Caco-2 (cell line): ENCODE measurements at regions of chr19 and their contacts with region 1.

Region 1: GRCh38 chr19:43743022-43743421 is 11.7 kb downstream of the SMG9 start:
- DNase-seq: no peak
- H3K4me3 ChIP-seq: no peak overlapping the region
- H3K4me3 Mint-ChIP-seq: no peak overlapping the region
- H3K27ac Mint-ChIP-seq: peak overlapping the region; percentile 39
- H3K4me1 ChIP-seq: peaks cover 9% of the 10 kb centered on the region
- H3K4me1 Mint-ChIP-seq: peaks cover 4% of the 10 kb centered on the region
- H3K27me3 ChIP-seq: no peaks in the 10 kb centered on the region
- H3K27me3 Mint-ChIP-seq: no peaks in the 10 kb centered on the region
- CTCF ChIP-seq: no peak

Region 2: DNA sequence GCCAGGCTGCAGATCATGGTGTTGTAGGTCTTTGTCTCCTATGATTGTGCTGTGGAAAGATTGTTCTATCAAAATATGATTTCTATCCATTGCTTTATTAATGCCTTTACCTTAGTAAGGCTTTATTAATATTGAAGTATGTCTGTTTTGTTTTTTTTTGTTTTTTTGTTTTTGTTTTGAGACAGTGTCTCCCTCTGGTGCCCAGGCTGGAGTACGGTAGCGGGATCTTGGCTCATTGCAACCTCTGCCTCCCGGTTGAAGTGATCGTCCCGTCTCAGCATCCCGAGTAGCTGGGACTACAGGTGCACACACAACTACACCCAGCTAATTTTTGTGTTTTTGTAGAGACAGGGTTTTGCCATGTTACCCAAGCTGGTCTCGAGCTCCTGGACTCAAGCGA is 19.4 kb before region 1 on chr19:
- CTCF ChIA-PET with region 1: no interaction called
- POLR2A ChIA-PET with region 1: no interaction called
- intact Hi-C with region 1: no loop called
- DNase-seq: no peak
- H3K4me3 ChIP-seq: no peak overlapping the region
- H3K4me3 Mint-ChIP-seq: no peak overlapping the region
- H3K27ac Mint-ChIP-seq: no peak overlapping the region
- H3K4me1 ChIP-seq: no peaks in the 10 kb centered on the region
- H3K4me1 Mint-ChIP-seq: no peaks in the 10 kb centered on the region
- H3K27me3 ChIP-seq: no peaks in the 10 kb centered on the region
- H3K27me3 Mint-ChIP-seq: no peaks in the 10 kb centered on the region
- CTCF ChIP-seq: peak in 1 of 2 experiments; percentile 9

Region 3: DNA sequence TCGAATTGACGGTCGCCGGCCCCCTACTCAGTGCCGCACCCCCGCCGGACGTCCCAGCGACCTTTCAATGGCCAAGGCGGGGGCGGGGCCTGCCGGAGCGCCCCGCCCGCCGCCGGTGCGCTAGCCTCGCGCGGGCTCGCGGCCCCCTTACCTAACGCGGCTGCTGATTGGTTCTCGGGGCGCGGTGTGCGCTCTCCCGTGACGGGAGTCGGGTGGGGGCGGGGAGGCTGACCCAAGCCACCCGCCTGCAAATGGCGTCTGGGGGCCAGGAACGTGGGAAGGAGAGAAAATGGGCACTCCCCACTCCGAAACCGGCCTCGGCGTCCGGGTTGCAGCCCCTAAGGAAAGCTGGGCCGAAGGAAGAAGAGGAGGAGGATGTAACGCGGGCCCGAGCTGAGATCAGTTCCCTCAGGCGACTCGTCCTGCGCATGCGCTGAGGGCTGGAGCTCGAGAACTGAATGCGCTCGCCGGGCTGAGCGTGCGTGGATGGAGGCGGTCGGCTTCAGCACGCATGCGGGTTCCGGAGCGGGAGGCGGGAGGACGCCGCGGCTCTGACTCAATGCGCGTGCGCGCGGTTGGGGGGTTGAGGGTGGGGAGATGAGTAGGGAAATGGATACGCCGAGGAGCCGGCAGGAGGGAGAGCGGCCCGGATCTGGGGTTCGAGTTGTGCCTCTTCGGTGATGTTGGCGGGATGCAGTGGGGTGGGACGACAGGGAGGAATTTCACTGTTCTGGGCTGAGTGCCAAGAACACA is 11.7 kb after region 1 on chr19 and contains the start of gene SMG9:
- CTCF ChIA-PET with region 1: interaction called, 15 read pairs
- POLR2A ChIA-PET with region 1: interaction called, 6 read pairs
- intact Hi-C with region 1: no loop called
- DNase-seq: peak; percentile 98 to 99
- H3K4me3 ChIP-seq: peak within 1 kb of the TSS; percentile 98
- H3K4me3 Mint-ChIP-seq: peak within 1 kb of the TSS; percentile 97
- H3K27ac Mint-ChIP-seq: peak within 1 kb of the TSS; percentile 100
- H3K4me1 ChIP-seq: no peaks in the 10 kb centered on the region
- H3K4me1 Mint-ChIP-seq: peaks cover 11% of the 10 kb centered on the region
- H3K27me3 ChIP-seq: no peaks in the 10 kb centered on the region
- H3K27me3 Mint-ChIP-seq: no peaks in the 10 kb centered on the region
- CTCF ChIP-seq: no peak
- total RNA-seq, gene SMG9: 87.6 and 98.8 TPM in 2 replicates

Region 4: GRCh38 chr19:43784981-43785808 is 42.2 kb after region 1 on chr19:
- CTCF ChIA-PET with region 1: interaction called, 33 read pairs
- POLR2A ChIA-PET with region 1: interaction called, 3 read pairs
- intact Hi-C with region 1: loop called (anchors 1 kb)
- DNase-seq: peak; percentile 78 to 84
- H3K4me3 ChIP-seq: no peak overlapping the region
- H3K4me3 Mint-ChIP-seq: no peak overlapping the region
- H3K27ac Mint-ChIP-seq: peak overlapping the region; percentile 1
- H3K4me1 ChIP-seq: peaks cover 4% of the 10 kb centered on the region
- H3K4me1 Mint-ChIP-seq: peaks cover 21% of the 10 kb centered on the region
- H3K27me3 ChIP-seq: no peaks in the 10 kb centered on the region
- H3K27me3 Mint-ChIP-seq: no peaks in the 10 kb centered on the region
- CTCF ChIP-seq: peak; percentile 96 to 99

Region 5: GRCh38 chr19:43809762-43810696 is 67.0 kb after region 1 on chr19:
- CTCF ChIA-PET with region 1: interaction called, 21 read pairs
- POLR2A ChIA-PET with region 1: no interaction called
- intact Hi-C with region 1: loop called (anchors 1 kb)
- DNase-seq: peak in 1 of 2 experiments; percentile 33
- H3K4me3 ChIP-seq: no peak overlapping the region
- H3K4me3 Mint-ChIP-seq: no peak overlapping the region
- H3K27ac Mint-ChIP-seq: no peak overlapping the region
- H3K4me1 ChIP-seq: no peaks in the 10 kb centered on the region
- H3K4me1 Mint-ChIP-seq: no peaks in the 10 kb centered on the region
- H3K27me3 ChIP-seq: no peaks in the 10 kb centered on the region
- H3K27me3 Mint-ChIP-seq: peaks cover 7% of the 10 kb centered on the region
- CTCF ChIP-seq: peak; percentile 34 to 46